Activated naive CD4-positive, alpha-beta T cell treated with anti-CD3 and anti-CD28 coated beads, Interleukin-2, amount 10 ng/mL, durations not matched to agents 7 days and 5 days (primary cell): ENCODE measurements at regions of chr20 and their contacts with region 1.

Region 1: DNA sequence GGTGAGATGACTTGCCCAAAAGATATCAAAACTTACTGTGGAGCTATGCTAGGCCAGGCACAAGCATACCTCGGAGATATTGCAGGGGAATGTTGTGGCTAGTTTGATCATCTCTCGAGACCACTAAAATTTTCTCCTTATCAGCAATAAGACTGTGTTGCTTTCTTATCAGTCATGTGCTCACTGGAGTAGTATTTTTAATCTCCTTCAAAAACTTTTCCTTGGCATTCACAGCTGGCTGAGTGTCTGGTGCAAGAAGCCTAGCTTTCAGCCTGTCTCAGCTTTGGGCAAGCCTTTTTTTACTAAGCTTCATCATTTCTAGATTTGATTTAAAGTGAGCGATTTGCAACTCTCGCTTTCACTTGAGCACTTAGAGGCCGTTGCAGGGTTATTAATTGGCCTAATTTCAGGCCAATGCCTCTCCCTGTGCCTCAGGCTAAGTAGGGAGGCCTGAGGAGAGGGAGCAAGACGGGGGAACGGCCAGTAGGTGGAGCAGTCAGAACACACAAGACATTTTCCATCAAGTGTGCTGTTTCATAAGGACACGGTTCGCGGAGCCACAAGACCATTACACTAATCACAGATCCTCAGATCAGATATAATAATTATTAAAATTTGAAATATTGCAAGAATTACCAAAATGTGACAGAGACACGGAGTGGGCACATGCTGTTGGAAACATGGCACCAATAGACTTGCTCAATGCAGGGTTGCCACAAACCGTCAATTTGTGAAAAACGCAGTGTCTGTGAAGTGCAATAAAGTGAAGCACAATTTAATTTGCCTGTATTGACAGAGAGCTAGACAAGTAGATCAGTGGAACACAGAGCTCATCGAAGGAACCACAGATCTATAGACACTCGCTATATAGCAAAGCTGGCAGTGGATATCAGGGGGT is 106.8 kb upstream of the SIRPG start:
- DNase-seq: peak; percentile 74
- H3K4me3 Mint-ChIP-seq: no peak overlapping the region
- H3K27ac Mint-ChIP-seq: no peak overlapping the region
- H3K4me1 Mint-ChIP-seq: no peaks in the 10 kb centered on the region
- H3K27me3 Mint-ChIP-seq: peaks cover 16% of the 10 kb centered on the region

Region 2: GRCh38 chr20:1336699-1337367 is 427.6 kb before region 1 on chr20:
- CTCF ChIA-PET with region 1: no interaction called
- DNase-seq: no peak
- H3K4me3 Mint-ChIP-seq: no peak overlapping the region
- H3K27ac Mint-ChIP-seq: peak overlapping the region; percentile 77
- H3K4me1 Mint-ChIP-seq: peaks cover 33% of the 10 kb centered on the region
- H3K27me3 Mint-ChIP-seq: no peaks in the 10 kb centered on the region

Region 3: GRCh38 chr20:1509237-1509636 is 255.1 kb before region 1 on chr20:
- CTCF ChIA-PET with region 1: interaction called, 15 read pairs
- DNase-seq: peak; percentile 53
- H3K4me3 Mint-ChIP-seq: no peak overlapping the region
- H3K27ac Mint-ChIP-seq: no peak overlapping the region
- H3K4me1 Mint-ChIP-seq: no peaks in the 10 kb centered on the region
- H3K27me3 Mint-ChIP-seq: peaks cover 49% of the 10 kb centered on the region

Region 4: GRCh38 chr20:1671891-1672669 is 92.3 kb before region 1 on chr20:
- CTCF ChIA-PET with region 1: no interaction called
- DNase-seq: no peak
- H3K4me3 Mint-ChIP-seq: peak overlapping the region; percentile 12
- H3K27ac Mint-ChIP-seq: peak overlapping the region; percentile 87
- H3K4me1 Mint-ChIP-seq: peaks cover 86% of the 10 kb centered on the region
- H3K27me3 Mint-ChIP-seq: no peaks in the 10 kb centered on the region

Region 5: GRCh38 chr20:1776681-1777475 is 12.5 kb after region 1 on chr20:
- CTCF ChIA-PET with region 1: interaction called, 36 read pairs
- DNase-seq: peak; percentile 87
- H3K4me3 Mint-ChIP-seq: peak overlapping the region; percentile 79
- H3K27ac Mint-ChIP-seq: no peak overlapping the region
- H3K4me1 Mint-ChIP-seq: peaks cover 14% of the 10 kb centered on the region
- H3K27me3 Mint-ChIP-seq: peaks cover 33% of the 10 kb centered on the region